PC-9 (cell line): ENCODE measurements at regions of chr2 and their contacts with region 1.

Region 1: DNA sequence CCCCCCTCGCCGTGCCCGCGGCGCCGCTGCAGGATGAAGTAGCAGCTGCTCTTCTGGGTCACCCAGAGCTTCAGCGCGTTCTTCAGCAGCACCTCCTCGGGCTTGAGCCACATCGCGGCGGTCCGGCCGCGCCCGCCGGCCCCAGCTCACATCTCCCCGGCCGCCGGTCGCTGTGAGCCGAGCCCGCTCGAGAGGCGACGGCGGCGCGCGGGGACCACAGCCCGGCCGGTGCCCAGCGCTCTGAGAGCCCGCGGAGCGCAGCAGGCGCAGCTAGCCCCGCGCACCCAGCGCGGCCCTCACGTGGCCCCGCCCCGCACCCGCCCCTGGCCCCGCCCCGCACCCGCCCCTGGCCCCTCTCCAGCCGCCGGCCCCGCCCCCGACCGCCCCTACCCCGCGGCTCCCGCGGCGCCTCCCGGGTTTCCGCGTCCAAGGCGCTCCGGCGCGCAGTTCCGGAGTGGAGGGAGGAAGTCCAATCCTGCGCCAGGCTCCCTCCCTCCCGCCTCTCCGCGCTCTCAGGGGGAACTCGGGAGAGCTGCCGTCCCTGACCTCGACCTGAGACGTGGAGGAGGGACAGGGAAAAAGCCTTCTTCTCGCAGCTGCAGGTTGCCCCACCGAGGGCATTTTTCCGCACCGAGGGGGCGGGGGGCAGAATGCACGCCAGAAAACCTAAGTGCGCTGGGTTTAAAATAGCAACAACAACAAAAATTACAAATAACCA is at the start of gene TBC1D8:
- DNase-seq: peak; percentile 57 to 88
- H3K4me3 ChIP-seq: peak within 1 kb of the TSS; percentile 86
- H3K27ac ChIP-seq: peak within 1 kb of the TSS; percentile 28
- H3K4me1 ChIP-seq: peaks cover 35% of the 10 kb centered on the region
- H3K27me3 ChIP-seq: no peaks in the 10 kb centered on the region
- CTCF ChIP-seq: no peak
- total RNA-seq, gene TBC1D8: 25.2 and 25.3 TPM in 2 replicates

Region 2: DNA sequence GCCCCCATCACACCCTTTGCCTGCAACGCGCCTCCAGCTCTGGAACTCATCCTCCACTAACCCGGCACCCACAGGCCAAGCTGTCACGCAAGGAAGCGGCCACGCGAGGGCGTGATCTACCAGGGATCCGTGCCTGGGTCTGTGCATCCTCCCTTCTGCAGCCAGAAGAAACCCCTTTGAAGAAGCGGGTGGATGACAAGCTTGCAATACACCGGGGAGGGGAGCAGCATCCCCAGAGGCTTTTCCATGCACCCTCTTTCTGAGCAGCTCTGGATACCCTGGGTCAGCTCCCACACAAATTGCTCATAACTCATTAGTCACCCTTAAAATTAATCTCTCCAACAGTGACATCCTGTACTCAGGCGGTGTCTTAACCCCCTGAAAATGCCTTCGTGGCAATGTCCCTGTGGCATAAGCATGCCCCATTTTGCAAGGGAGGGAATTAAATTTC is 540.9 kb before region 1 on chr2:
- CTCF ChIA-PET with region 1: no interaction called
- POLR2A ChIA-PET with region 1: no interaction called
- intact Hi-C with region 1: loop called (anchors 2 kb)
- DNase-seq: peak; percentile 35 to 80
- H3K4me3 ChIP-seq: no peak overlapping the region
- H3K27ac ChIP-seq: no peak overlapping the region
- H3K4me1 ChIP-seq: no peaks in the 10 kb centered on the region
- H3K27me3 ChIP-seq: no peaks in the 10 kb centered on the region
- CTCF ChIP-seq: peak; percentile 79

Region 3: DNA sequence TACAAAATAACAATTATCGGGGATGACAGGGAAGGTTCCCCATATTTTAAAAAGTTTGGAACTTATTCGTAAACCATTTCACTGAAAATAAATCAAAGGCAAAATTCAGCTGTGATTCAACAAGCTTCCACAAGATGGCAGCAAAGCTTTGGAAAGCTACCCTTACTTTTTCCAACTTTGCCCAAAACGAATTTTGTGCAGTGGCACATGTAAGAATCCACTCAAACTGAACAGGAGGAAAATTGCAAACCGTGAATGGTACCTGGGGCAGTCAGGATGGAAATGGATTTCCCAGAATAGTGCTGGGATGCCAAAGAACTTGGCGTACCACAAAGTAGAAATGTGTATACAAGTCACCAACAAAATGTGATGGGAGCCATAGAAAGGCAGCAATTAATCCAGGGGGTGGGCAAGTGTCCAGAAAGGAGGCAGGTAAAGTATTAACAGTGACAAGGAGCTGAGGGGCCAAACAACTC is 138.6 kb before region 1 on chr2:
- CTCF ChIA-PET with region 1: interaction called, 3 read pairs
- POLR2A ChIA-PET with region 1: no interaction called
- intact Hi-C with region 1: loop called (anchors 1 kb)
- DNase-seq: peak; percentile 19 to 39
- H3K4me3 ChIP-seq: no peak overlapping the region
- H3K27ac ChIP-seq: no peak overlapping the region; the same call in 1 of the 2 replicates
- H3K4me1 ChIP-seq: no peaks in the 10 kb centered on the region
- H3K27me3 ChIP-seq: no peaks in the 10 kb centered on the region
- CTCF ChIP-seq: peak; percentile 91

Region 4: DNA sequence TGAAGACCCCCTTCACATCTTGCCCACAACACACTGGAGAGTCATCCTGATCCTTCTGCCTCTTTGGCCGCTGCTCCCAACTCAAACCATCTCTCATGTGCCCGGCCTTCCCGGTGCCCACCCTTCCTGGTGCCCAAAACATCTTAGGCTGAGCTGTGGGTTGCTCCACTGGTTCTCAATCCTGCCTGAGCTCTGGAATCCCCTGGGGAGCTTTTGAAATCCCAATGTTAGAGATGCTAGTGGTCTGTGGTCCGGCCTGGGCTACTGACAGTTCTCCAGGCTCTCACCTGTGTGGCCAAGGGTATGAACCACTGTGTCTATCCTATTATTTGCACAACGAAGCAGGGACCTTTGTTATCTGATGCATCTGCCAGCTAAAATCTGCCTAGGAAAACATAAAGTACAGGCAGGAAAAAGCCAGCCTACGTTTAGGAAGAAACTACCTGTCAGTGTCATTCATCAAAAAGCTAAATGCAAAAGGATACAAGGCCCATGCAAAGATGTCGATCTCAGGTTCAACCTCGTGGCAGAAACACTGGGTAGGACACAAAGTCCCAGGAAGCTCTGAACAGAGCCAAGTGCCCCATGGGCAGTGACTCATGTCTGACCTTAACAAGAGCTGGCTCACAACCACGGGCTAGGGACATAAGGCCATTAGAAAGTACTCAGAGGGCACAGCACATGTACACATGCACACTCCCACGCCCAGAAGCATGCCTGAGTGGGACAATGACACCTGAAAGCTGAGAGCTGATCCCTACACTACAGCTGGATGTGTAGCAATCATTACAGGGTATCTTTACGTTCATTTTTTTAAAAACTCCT is 30.9 kb before region 1 on chr2:
- CTCF ChIA-PET with region 1: no interaction called
- POLR2A ChIA-PET with region 1: no interaction called
- intact Hi-C with region 1: loop called (anchors 1 kb)
- DNase-seq: peak; percentile 79 to 98
- H3K4me3 ChIP-seq: no peak overlapping the region
- H3K27ac ChIP-seq: peak overlapping the region; percentile 84
- H3K4me1 ChIP-seq: peaks cover 90% of the 10 kb centered on the region
- H3K27me3 ChIP-seq: no peaks in the 10 kb centered on the region
- CTCF ChIP-seq: no peak

Region 5: DNA sequence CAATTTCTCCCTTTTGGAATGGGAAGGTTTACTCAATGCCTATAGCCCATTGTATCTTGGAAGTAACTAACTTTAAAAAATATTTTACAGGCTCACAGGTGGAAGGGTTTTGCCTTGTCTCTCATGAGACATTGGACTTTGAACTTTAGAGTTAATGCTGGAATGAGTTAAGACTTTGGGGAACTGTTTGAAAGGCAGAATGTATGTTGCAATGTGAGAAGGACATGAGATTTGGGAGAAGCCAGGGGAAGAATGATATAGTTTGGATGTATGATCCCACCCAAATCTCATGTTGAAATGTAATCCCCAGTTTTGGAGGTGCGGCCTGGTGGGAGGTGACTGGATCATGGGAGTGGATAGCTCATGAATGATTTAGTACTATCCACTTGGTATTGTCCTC is 17.4 kb after region 1 on chr2:
- CTCF ChIA-PET with region 1: no interaction called
- POLR2A ChIA-PET with region 1: no interaction called
- intact Hi-C with region 1: no loop called
- DNase-seq: no peak
- H3K4me3 ChIP-seq: no peak overlapping the region
- H3K27ac ChIP-seq: no peak overlapping the region
- H3K4me1 ChIP-seq: no peaks in the 10 kb centered on the region
- H3K27me3 ChIP-seq: no peaks in the 10 kb centered on the region
- CTCF ChIP-seq: no peak

Region 6: DNA sequence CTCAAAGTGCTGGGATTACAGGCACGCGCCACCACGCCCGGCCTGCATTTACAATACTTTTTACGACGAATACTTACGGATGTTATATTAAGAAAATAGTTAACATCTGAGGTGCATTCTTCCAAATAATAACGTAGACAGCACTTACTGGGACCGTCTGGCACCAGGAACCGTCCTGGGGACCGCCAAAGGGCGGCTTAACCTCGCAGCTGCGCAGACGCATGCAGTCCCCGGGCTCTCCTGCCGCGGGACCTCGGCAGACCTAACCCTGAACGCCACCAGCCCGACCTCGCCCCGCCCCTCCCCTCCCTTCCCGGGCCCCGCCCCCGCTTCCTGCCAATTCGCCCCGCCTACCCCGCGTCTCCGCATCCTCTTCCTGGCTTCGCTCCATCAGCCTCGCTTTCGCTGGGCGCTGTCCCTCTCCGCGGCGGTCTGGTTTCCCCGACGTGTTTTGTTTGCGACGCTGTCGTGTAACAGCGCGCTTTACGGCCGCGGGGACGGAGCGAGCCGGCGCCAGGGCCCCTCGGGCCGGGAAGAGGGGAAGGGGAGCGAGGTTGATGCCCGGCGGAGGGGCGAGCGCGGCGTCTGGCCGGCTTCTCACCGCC is 101.2 kb after region 1 on chr2 and contains the start of gene CNOT11:
- CTCF ChIA-PET with region 1: no interaction called
- POLR2A ChIA-PET with region 1: interaction called, 3 read pairs
- intact Hi-C with region 1: loop called (anchors 5 kb)
- DNase-seq: peak; percentile 91 to 97
- H3K4me3 ChIP-seq: peak within 1 kb of the TSS; percentile 66
- H3K27ac ChIP-seq: peak within 1 kb of the TSS; percentile 71
- H3K4me1 ChIP-seq: peaks cover 33% of the 10 kb centered on the region
- H3K27me3 ChIP-seq: no peaks in the 10 kb centered on the region
- CTCF ChIP-seq: no peak
- total RNA-seq, gene CNOT11: 39.0 and 60.6 TPM in 2 replicates

Region 7: DNA sequence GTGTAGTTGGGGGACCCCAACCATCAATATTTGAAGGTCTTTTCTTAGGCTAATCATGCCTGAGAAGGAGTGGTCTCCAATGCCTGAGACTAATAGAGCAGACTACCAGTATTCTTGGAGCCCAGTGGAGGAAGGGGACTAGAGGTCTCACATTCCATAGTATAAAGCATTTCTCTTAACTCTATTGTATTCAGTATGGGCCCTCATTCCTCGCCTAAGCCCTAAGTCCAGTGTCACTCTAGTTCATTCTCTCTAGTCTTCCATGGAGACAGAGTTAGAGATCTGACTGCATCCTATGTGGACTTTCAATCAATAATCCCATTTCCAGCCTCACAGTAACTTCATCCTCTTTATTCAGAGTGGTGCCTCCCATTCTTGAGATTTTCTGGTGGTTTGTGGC is 516.5 kb after region 1 on chr2:
- CTCF ChIA-PET with region 1: no interaction called
- POLR2A ChIA-PET with region 1: no interaction called
- intact Hi-C with region 1: no loop called
- DNase-seq: no peak
- H3K4me3 ChIP-seq: no peak overlapping the region
- H3K27ac ChIP-seq: no peak overlapping the region
- H3K4me1 ChIP-seq: no peaks in the 10 kb centered on the region
- H3K27me3 ChIP-seq: no peaks in the 10 kb centered on the region
- CTCF ChIP-seq: no peak